ENCODE measurements at regions of chr9 and their contacts with region 1.

Region 1: DNA sequence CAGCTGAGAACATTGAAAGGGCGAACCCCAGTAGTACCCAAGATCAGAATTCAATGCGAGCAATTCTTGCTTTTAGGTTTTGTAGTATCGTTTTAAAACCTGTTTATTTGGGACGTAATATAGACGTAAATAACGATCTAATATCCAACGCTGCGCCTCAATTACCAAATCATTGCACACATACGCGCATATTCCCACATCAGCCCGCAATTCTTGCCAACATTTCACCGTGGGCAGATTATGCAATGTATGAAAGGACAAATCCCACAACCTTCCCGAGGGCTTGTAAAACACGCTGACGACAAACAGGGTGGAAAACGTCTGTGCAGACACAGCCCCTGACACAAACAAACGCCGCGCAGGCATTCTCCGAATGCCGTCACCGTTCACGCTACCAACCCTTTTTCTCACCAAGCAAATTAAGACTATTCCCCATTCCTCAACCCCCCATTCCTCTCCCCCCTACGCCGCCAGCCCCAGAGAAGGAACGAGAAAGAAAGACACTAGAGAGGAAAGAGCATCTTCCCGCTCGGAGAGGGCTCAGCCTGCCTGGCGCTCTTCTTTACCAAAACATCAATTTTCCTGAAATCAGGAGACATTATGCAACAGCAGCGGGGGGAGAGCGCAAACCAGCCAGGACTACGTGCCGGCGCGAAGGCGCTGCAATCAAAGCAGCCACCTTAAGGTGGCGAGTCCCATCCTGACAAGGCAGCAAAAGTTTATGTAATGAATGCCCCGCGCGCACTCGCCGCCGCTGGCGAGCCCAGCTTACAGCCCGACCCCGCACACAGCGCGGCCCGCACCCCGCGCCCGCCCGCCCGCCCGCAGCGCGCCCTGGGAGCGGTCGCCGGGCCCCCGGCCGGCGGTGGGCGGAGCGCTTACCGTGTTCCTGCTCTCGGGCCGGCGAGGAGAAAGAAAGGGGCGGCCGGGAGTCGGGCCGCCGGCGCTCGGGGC is 597 bp downstream of the NFIL3 start:
- DNase-seq: peak; percentile 73
- H3K4me3 ChIP-seq: peak overlapping the region; percentile 57 to 81 (median 60)
- H3K27ac ChIP-seq: peak overlapping the region; percentile 46
- H3K4me1 ChIP-seq: peaks cover 35% of the 10 kb centered on the region
- H3K27me3 ChIP-seq: no peaks in the 10 kb centered on the region
- CTCF ChIP-seq: peak; percentile 4 to 38
- POLR2A ChIP-seq: no peak

Region 2: GRCh38 chr9:90985631-90986030 is 437.4 kb before region 1 on chr9:
- CTCF ChIA-PET with region 1: interaction called, 37 read pairs
- POLR2A ChIA-PET with region 1: no interaction called
- dilution Hi-C with region 1: no loop called
- intact Hi-C with region 1: no loop called
- DNase-seq: peak; percentile 5
- H3K4me3 ChIP-seq: no peak overlapping the region
- H3K27ac ChIP-seq: no peak overlapping the region
- H3K4me1 ChIP-seq: peaks cover 7% of the 10 kb centered on the region
- H3K27me3 ChIP-seq: no peaks in the 10 kb centered on the region
- CTCF ChIP-seq: no peak
- POLR2A ChIP-seq: no peak

Region 3: DNA sequence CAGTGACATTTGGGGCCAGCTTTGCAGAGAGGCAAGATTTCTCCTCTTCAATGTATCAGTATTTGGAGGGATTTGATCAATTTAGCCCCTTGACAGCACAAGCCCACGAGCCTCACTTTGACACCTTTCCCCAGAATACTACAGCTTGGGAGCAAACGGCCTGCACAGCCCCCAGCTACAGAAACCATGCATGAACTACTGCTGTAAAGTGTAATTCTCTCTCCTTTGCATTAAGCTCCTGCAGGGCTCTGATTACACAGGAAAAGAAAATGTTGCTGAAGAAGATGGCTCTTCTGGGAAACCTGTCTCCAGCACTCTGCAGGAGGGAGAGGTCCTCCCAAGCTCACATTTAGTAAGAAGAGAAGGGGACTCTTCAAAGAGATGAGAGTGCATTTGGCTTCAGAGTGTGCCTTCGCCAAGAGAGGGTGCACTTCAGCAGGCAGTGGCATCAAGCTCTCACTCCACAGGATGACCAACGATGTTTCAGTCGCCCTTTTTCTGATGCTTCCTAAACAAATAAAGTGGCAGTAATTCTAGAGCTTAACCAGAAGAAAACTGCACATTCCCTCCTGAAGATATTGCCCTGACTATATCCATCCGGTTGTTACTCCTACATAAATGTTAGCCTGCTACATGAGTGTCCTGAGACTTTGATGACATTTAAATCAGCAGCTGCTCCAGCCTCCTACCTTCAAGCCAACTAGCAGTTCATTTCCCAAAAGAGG is 333.5 kb before region 1 on chr9:
- CTCF ChIA-PET with region 1: interaction called, 42 read pairs
- POLR2A ChIA-PET with region 1: no interaction called
- dilution Hi-C with region 1: no loop called
- intact Hi-C with region 1: loop called (anchors 1 kb)
- DNase-seq: peak; percentile 41
- H3K4me3 ChIP-seq: no peak overlapping the region
- H3K27ac ChIP-seq: no peak overlapping the region
- H3K4me1 ChIP-seq: no peaks in the 10 kb centered on the region
- H3K27me3 ChIP-seq: peaks cover 0 to 5% of the 10 kb centered on the region in 2 experiments
- CTCF ChIP-seq: peak in 1 of 2 donors; percentile 42
- POLR2A ChIP-seq: no peak

Region 4: GRCh38 chr9:91193658-91194391 is 229.2 kb before region 1 on chr9:
- CTCF ChIA-PET with region 1: interaction called, 4 read pairs
- POLR2A ChIA-PET with region 1: interaction called, 4 read pairs
- dilution Hi-C with region 1: no loop called
- intact Hi-C with region 1: loop called (anchors 1 kb)
- DNase-seq: peak; percentile 94
- H3K4me3 ChIP-seq: peak overlapping the region in 2 of 3 experiments; percentile 28 to 51
- H3K27ac ChIP-seq: peak overlapping the region; percentile 100
- H3K4me1 ChIP-seq: peaks cover 21% of the 10 kb centered on the region
- H3K27me3 ChIP-seq: no peaks in the 10 kb centered on the region
- CTCF ChIP-seq: no peak
- POLR2A ChIP-seq: peak; percentile 40

Region 5: GRCh38 chr9:91298311-91298710 is 124.7 kb before region 1 on chr9:
- CTCF ChIA-PET with region 1: no interaction called
- POLR2A ChIA-PET with region 1: no interaction called
- dilution Hi-C with region 1: no loop called
- intact Hi-C with region 1: loop called (anchors 5 kb)
- DNase-seq: no peak
- H3K4me3 ChIP-seq: no peak overlapping the region
- H3K27ac ChIP-seq: no peak overlapping the region
- H3K4me1 ChIP-seq: peaks cover 9% of the 10 kb centered on the region
- H3K27me3 ChIP-seq: no peaks in the 10 kb centered on the region
- CTCF ChIP-seq: no peak
- POLR2A ChIP-seq: no peak

Region 6: DNA sequence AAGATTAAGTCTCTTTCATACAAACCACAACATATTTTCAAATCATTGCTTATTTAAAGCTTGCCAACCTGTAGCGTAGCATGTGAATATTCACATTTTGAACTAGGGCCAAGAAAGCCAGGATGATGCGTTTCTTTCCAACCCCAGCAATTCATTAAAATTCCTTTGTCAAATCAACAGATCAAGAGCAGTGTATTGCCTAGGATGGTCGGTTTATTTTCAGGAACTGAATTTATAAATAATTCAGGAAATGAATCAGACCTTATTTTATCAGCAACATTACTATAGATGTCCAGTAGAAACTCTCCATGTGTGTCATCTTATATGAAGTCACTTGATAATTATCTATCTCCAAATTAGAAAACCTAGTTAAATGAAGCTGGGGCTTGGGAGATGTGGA is 48.1 kb before region 1 on chr9:
- CTCF ChIA-PET with region 1: no interaction called
- POLR2A ChIA-PET with region 1: interaction called, 3 read pairs
- dilution Hi-C with region 1: no loop called
- intact Hi-C with region 1: loop called (anchors 2 kb)
- DNase-seq: peak; percentile 60
- H3K4me3 ChIP-seq: no peak overlapping the region
- H3K27ac ChIP-seq: no peak overlapping the region
- H3K4me1 ChIP-seq: peaks cover 20% of the 10 kb centered on the region
- H3K27me3 ChIP-seq: no peaks in the 10 kb centered on the region
- CTCF ChIP-seq: no peak
- POLR2A ChIP-seq: no peak

Region 7: DNA sequence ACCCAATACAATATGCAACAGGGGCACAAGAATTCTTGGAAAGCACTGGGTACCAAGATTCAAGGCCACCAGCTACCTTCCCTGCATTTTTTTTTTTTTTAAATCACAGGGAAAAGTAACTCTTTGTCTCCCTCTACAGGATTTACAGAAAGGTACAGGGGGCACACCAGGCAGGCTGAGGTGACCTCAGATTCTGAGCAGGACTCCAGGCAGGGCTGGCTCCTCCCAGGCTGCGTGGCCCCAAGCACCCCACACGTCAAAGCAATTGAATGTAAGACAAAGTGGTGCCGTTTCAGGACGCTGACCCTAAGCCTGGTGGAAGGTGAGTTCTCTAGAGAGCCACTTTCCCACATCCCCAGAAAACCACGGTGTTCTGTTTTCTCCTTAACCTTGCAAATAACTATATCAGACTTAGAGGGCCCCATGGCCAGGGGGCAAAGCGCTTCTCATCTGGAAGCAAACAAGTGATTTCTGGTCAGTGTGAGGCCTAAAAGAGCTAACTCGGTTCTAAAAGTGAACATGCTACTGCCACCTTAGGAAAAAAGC is 304.4 kb after region 1 on chr9:
- CTCF ChIA-PET with region 1: interaction called, 6 read pairs
- POLR2A ChIA-PET with region 1: no interaction called
- dilution Hi-C with region 1: no loop called
- intact Hi-C with region 1: loop called (anchors 5 kb)
- DNase-seq: peak; percentile 50
- H3K4me3 ChIP-seq: no peak overlapping the region
- H3K27ac ChIP-seq: no peak overlapping the region
- H3K4me1 ChIP-seq: no peaks in the 10 kb centered on the region
- H3K27me3 ChIP-seq: no peaks in the 10 kb centered on the region
- CTCF ChIP-seq: peak; percentile 62 to 64
- POLR2A ChIP-seq: no peak

Measured in endothelial cell of umbilical vein (primary cell).